Right cardiac atrium (tissue), 5 donors: ENCODE measurements at regions of chr7 and their contacts with region 1.

Region 1: DNA sequence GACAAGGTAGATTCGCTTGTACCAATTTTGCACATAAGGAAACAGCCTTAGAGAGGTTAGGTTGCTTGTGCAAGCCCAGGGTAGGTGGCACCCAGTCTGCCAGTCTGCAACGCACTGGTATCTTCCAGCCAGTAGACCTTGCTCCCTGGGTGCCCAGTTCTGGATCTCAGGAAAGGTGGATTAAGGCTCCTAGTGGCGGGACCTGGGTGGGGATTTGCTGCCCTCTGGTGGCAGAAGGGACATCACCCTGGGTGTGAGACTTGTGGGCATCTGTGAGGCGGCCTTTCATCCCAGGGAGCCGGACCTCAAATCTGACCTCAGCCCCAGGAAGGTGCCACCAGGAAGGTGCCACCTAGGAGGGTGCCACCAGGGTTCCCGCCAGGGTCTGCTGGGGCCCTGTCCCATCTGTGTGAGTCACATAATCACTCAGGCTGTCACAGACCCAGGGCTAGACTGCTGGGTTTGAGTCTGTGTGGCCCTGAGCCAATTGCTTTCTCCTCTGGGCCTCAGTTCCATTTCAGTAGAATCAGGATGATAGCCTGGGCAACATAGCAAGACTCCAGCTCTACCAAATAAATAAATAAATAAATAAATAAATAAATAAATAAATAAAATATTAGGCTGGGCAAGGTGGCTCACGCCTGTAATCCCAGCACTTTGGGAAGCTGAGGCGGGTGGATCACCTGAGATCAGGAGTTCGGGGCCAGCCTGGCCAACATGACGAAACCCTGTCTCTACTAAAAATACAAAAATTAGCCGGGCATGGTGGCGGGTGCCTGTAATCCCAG is 5.3 kb upstream of the PRKRIP1 start:
- DNase-seq: peak; percentile 81 to 92 (median 90)
- ATAC-seq: peak; percentile 81 to 83
- H3K4me3 ChIP-seq: no peak overlapping the region
- H3K27ac ChIP-seq: no peak overlapping the region
- H3K4me1 ChIP-seq: no peaks in the 10 kb centered on the region
- H3K27me3 ChIP-seq: no peaks in the 10 kb centered on the region

Region 2: GRCh38 chr7:102272075-102272917 is 118.6 kb before region 1 on chr7:
- intact Hi-C with region 1: no loop called
- DNase-seq: peak; percentile 83 to 94 (median 92)
- ATAC-seq: peak; percentile 87 to 88
- H3K4me3 ChIP-seq: no peak overlapping the region
- H3K27ac ChIP-seq: no peak overlapping the region
- H3K4me1 ChIP-seq: no peaks in the 10 kb centered on the region
- H3K27me3 ChIP-seq: no peaks in the 10 kb centered on the region

Region 3: DNA sequence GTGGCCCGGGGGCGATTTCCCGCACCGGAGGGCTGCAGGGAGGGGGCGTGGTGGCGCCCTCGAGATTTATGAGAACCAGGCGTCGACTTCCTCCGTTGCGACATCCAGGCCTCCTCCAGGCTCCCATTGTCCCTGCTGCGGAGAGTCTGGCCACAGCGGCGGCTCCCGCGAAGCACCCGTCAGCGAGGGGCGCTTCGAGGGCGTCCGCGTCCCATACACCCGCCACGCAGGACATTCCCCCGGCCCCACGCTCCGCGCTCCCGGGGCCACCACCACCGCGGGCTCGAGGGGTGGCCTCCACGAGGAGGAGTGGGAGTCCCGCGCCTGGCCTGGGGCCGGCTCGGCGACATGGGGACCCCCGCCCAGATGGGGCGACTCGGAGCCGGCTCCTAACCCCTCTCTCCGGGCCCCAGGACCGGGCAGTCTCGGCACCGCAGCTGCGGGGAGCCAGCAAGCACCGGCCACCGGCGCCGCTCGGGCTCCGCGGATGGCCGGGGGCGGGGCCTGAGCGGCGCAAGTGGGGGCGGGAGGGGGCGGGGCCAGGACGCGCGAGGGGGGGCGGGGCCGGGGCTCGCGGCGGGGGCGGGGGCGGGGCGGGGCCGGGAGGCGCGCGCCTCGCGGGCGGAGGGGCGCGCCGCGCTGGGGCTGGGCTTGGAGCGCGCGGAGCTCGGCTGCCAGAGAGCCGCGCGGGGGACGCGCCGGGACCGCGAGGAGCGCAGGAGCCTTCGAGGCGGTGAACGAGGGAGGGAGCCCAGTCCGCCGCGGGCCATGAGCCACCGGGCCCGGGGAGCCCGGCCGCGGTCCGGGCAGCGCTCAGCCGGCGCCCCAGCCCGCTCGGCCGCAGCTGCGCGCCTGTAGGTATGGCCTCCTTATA is 104.4 kb before region 1 on chr7 and contains the start of gene SH2B2:
- intact Hi-C with region 1: loop called (anchors 2 to 10 kb)
- DNase-seq: peak; percentile 85 to 93 (median 90)
- ATAC-seq: peak; percentile 76 to 84
- H3K4me3 ChIP-seq: peak within 1 kb of the TSS; percentile 70
- H3K27ac ChIP-seq: peak within 1 kb of the TSS; percentile 81
- H3K4me1 ChIP-seq: no peaks in the 10 kb centered on the region
- H3K27me3 ChIP-seq: no peaks in the 10 kb centered on the region
- total RNA-seq, gene SH2B2: 0.49 to 2.8 (median 1.2) TPM

Region 4: GRCh38 chr7:102300643-102301233 is 90.2 kb before region 1 on chr7:
- intact Hi-C with region 1: no loop called
- DNase-seq: peak in 1 of 3 donors; percentile 69
- ATAC-seq: peak; percentile 6 to 34
- H3K4me3 ChIP-seq: no peak overlapping the region
- H3K27ac ChIP-seq: no peak overlapping the region
- H3K4me1 ChIP-seq: no peaks in the 10 kb centered on the region
- H3K27me3 ChIP-seq: no peaks in the 10 kb centered on the region